Pancreas (tissue), 10 donors: ENCODE measurements at regions of chr12 and their contacts with region 1.

Region 1: DNA sequence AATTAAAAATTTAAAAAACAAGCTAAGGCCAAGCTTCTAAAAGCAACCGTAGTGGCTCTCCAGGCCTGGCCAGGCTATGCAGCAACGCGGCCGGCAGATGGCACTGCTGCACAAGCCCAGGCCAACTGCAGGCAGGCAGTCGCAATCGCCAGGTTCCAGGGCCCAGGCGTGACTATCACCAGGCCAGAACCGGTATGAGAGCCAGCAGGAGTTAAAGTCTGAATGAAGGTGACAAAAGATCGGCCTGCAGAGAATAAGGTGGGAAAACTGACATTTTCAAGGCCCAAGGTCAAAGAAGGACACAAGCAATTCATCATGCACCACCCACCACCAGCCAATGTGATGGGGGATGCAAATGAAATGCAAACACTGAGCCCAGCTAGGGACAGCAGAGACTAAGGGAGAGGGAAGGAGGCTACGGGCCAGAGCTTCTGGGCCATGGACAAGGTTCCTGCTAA is 43.6 kb upstream of the ANO2 start:
- DNase-seq: peak; percentile 54 to 91 (median 80)
- ATAC-seq: peak; percentile 95 to 100 (median 99)
- H3K4me3 ChIP-seq: no peak overlapping the region
- H3K27ac ChIP-seq: no peak overlapping the region
- H3K4me1 ChIP-seq: no peaks in the 10 kb centered on the region
- H3K27me3 ChIP-seq: no peaks in the 10 kb centered on the region
- CTCF ChIP-seq: peak; percentile 89 to 96 (median 94)

Region 2: GRCh38 chr12:6039894-6040568 is 51.3 kb after region 1 on chr12:
- intact Hi-C with region 1: loop called in 2 of 3 experiments (anchors 5 to 10 kb)
- DNase-seq: peak in 2 of 6 donors; percentile 39 to 53
- ATAC-seq: peak; percentile 76 to 95 (median 90)
- H3K4me3 ChIP-seq: no peak overlapping the region
- H3K27ac ChIP-seq: no peak overlapping the region
- H3K4me1 ChIP-seq: no peaks in the 10 kb centered on the region
- H3K27me3 ChIP-seq: no peaks in the 10 kb centered on the region
- CTCF ChIP-seq: peak; percentile 58 to 81 (median 80)

Region 3: GRCh38 chr12:6285063-6285477 is 296.4 kb after region 1 on chr12:
- intact Hi-C with region 1: loop called in 1 of 3 experiments (anchors 10 kb)
- DNase-seq: peak in 3 of 6 donors; percentile 55 to 74 (median 55)
- ATAC-seq: peak; percentile 62 to 91 (median 86)
- H3K4me3 ChIP-seq: no peak overlapping the region
- H3K27ac ChIP-seq: no peak overlapping the region
- H3K4me1 ChIP-seq: peaks cover 0 to 2% (median 0%) of the 10 kb centered on the region in 3 donors
- H3K27me3 ChIP-seq: no peaks in the 10 kb centered on the region
- CTCF ChIP-seq: peak; percentile 82 to 93 (median 88)